Ovary (tissue), 10 donors: ENCODE measurements at regions of chr11 and their contacts with region 1.

Region 1: GRCh38 chr11:126355324-126355925 is at the start of gene ST3GAL4:
- DNase-seq: peak; percentile 88 to 93 (median 92)
- H3K4me3 ChIP-seq: peak within 1 kb of the TSS; percentile 70
- H3K27ac ChIP-seq: peak within 1 kb of the TSS; percentile 82 to 95
- H3K4me1 ChIP-seq: peaks cover 39% of the 10 kb centered on the region
- H3K27me3 ChIP-seq: no peaks in the 10 kb centered on the region
- CTCF ChIP-seq: peak in 1 of 3 donors; percentile 6
- EP300 ChIP-seq: no peak
- POLR2A ChIP-seq: peak; percentile 50
- total RNA-seq, gene ST3GAL4: 75.8 to 300 (median 135) TPM

Region 2: DNA sequence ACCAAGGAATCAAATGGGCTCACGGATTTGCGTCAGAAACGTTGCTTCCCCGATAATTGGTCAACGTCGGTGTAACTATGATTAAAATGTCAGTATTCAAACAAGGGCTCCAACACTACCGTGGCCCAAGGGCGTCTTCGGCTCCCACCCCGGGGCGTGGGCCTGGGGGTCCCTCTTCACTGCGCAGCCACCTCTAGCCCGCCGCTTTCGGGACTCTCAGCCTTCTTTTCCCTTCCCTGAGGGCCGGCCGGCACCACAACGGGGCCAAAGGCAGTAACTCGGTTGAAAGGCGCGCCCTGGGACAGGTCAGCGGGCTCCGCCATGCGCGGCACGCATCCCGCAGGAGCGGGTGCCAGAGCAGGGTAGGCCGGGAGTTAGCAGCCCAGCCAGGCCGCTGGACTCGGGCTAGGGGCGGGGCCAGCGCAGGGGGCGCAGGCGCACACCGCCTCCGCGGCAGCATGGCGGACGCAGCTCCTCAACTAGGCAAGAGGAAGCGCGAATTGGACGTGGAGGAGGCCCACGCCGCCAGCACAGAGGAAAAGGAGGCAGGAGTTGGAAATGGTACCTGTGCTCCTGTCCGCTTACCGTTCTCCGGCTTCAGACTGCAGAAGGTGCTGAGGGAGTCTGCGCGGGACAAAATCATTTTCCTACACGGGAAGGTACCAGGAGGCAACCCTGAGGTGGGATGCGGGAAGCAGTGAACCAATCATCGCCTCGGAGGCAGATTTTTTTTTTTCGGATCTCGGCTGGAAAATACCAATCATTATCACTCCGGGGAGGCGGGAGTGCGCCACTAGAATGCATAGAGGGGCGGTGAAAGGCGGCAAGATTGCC is 51.6 kb before region 1 on chr11 and contains the start of gene DCPS:
- intact Hi-C with region 1: loop called in 2 of 4 experiments (anchors 2 to 10 kb)
- DNase-seq: peak; percentile 89 to 95 (median 91)
- H3K4me3 ChIP-seq: peak within 1 kb of the TSS; percentile 48
- H3K27ac ChIP-seq: peak within 1 kb of the TSS; percentile 66 to 79
- H3K4me1 ChIP-seq: peaks cover 6% of the 10 kb centered on the region
- H3K27me3 ChIP-seq: no peaks in the 10 kb centered on the region
- CTCF ChIP-seq: no peak
- EP300 ChIP-seq: no peak
- POLR2A ChIP-seq: peak; percentile 40
- total RNA-seq, gene DCPS: 6.6 to 17.2 (median 13.5) TPM

Region 3: DNA sequence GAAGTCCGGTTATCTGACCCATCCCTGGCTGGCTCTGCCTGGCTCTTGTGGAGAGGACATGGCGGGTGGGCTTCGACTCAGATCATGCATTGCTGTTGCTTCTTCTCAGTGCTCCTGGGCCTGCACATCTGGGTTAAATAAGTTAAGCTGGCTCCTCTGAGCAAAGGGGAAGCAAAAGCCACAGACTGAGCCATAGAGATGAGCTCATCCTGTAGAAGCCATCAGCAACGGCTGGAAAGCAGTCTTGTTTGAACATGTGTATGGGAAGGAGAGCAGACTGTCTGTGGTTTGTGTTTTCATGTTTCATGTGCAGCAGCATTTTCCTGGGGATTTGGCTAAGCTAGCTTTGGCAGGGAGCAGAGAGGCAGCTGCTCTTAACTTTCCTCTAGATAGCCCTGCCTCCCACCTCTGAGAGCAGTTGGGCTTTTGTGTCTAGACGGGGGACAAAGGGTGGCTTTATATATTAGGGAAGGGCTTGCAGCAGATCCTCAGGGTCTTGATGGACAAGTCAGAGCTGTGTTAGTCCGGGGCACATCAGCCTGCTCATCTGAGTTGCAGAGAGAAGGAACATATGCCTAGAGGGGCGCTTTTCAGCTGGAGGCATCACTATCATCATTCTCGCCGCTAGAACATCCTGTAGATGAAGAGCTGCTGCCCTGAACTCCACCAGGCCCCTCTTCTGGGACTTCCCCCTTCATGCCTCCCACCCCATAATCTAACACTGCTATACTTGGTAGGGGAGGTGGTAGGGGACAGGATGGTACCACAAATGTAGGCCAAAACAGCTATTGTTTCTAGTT is 36.7 kb before region 1 on chr11:
- intact Hi-C with region 1: loop called in 1 of 4 experiments (anchors 5 kb)
- DNase-seq: peak in 3 of 5 donors; percentile 40 to 52 (median 51)
- H3K4me3 ChIP-seq: no peak overlapping the region
- H3K27ac ChIP-seq: peak overlapping the region; percentile 31 to 71
- H3K4me1 ChIP-seq: peaks cover 16% of the 10 kb centered on the region
- H3K27me3 ChIP-seq: no peaks in the 10 kb centered on the region
- CTCF ChIP-seq: no peak
- EP300 ChIP-seq: no peak
- POLR2A ChIP-seq: no peak

Region 4: GRCh38 chr11:126391970-126392639 is 36.7 kb after region 1 on chr11:
- intact Hi-C with region 1: loop called in 1 of 4 experiments (anchors 5 kb)
- DNase-seq: peak in 3 of 5 donors; percentile 40 to 48 (median 48)
- H3K4me3 ChIP-seq: no peak overlapping the region
- H3K27ac ChIP-seq: no peak overlapping the region
- H3K4me1 ChIP-seq: peaks cover 42% of the 10 kb centered on the region
- H3K27me3 ChIP-seq: no peaks in the 10 kb centered on the region
- CTCF ChIP-seq: peak in 1 of 3 donors; percentile 17
- EP300 ChIP-seq: no peak
- POLR2A ChIP-seq: no peak

Region 5: DNA sequence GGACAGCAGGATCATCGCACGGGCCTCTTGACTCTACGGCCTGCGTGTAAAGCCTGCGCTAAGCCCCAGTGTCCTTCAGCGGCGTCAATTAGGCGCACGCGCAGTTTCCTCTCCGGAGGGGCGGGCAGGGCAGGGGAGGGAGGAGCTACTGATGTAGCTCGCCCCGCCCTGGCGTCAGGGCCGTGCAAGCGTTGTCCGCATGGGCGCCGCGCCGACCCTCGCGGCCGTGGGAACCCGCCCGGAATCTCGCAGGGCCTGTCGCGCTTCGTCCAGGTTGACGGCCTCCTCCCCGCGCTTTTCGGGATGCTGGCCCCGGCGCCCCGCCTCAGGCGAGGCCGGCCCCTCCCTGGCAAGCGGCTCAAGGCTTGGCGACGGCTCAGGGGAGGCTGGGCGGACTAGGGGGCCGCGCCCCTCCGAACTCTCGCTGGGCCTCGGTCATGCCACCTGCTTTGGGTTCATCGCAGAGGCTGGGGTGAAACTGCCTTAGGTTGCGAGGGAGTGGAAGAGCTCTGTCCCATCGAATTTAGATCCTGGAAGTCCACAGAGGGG is 61.2 kb after region 1 on chr11:
- intact Hi-C with region 1: loop called (anchors 5 kb)
- DNase-seq: peak; percentile 92 to 96 (median 95)
- H3K4me3 ChIP-seq: peak overlapping the region; percentile 45
- H3K27ac ChIP-seq: peak overlapping the region; percentile 79 to 93
- H3K4me1 ChIP-seq: peaks cover 42% of the 10 kb centered on the region
- H3K27me3 ChIP-seq: no peaks in the 10 kb centered on the region
- CTCF ChIP-seq: no peak
- EP300 ChIP-seq: no peak
- POLR2A ChIP-seq: peak; percentile 40